Activated CD8-positive, alpha-beta memory T cell treated with anti-CD3 and anti-CD28 coated beads, Interleukin-2, amount 10 ng/mL, durations not matched to agents 7 days and 5 days (primary cell): ENCODE measurements at regions of chr11 and their contacts with region 1.

Region 1: GRCh38 chr11:64878494-64879243 is at the start of gene EHD1:
- DNase-seq: peak; percentile 100
- ATAC-seq: peak; percentile 75
- H3K4me3 Mint-ChIP-seq: peak within 1 kb of the TSS; percentile 94
- H3K27ac Mint-ChIP-seq: peak within 1 kb of the TSS; percentile 93
- H3K4me1 Mint-ChIP-seq: peaks cover 66% of the 10 kb centered on the region
- H3K27me3 Mint-ChIP-seq: no peaks in the 10 kb centered on the region
- total RNA-seq, gene EHD1: 149 to 155 TPM

Region 2: GRCh38 chr11:64894070-64894796 is 15.6 kb after region 1 on chr11:
- CTCF ChIA-PET with region 1: interaction called, 80 read pairs
- DNase-seq: peak; percentile 94
- ATAC-seq: peak; percentile 98
- H3K4me3 Mint-ChIP-seq: no peak overlapping the region
- H3K27ac Mint-ChIP-seq: no peak overlapping the region
- H3K4me1 Mint-ChIP-seq: no peaks in the 10 kb centered on the region
- H3K27me3 Mint-ChIP-seq: no peaks in the 10 kb centered on the region